Caco-2 (cell line): ENCODE measurements at regions of chr5 and their contacts with region 1.

Region 1: DNA sequence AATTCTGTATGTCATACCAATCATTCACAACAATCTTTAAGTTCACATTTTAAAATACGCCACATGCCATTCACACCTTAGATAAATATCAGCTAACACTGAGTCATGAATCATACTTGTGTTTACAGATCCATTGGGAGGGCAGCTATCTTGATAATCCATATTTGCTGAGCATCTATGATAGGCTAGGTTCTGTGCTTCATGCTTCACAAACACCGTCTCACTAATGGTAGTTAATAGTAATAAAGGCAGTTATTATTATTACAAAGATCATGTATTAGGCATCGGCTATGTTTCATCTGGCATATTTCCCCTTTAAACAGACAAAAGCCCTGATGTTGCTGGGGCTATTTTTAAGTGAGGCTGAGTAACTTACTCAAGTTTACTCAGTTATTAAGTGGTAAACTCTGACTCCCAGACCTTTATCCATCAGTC is 152.2 kb upstream of the HMHB1 start:
- DNase-seq: peak; percentile 40 to 73
- H3K4me3 ChIP-seq: no peak overlapping the region
- H3K4me3 Mint-ChIP-seq: peak overlapping the region; percentile 30
- H3K27ac Mint-ChIP-seq: peak overlapping the region; percentile 88
- H3K4me1 ChIP-seq: peaks cover 32% of the 10 kb centered on the region
- H3K4me1 Mint-ChIP-seq: peaks cover 17% of the 10 kb centered on the region
- H3K27me3 ChIP-seq: no peaks in the 10 kb centered on the region
- H3K27me3 Mint-ChIP-seq: no peaks in the 10 kb centered on the region
- CTCF ChIP-seq: no peak

Region 2: GRCh38 chr5:143554918-143555519 is 104.7 kb before region 1 on chr5:
- CTCF ChIA-PET with region 1: no interaction called
- POLR2A ChIA-PET with region 1: no interaction called
- intact Hi-C with region 1: loop called (anchors 1 kb)
- DNase-seq: peak; percentile 53 to 64
- H3K4me3 ChIP-seq: no peak overlapping the region
- H3K4me3 Mint-ChIP-seq: no peak overlapping the region
- H3K27ac Mint-ChIP-seq: peak overlapping the region; percentile 79
- H3K4me1 ChIP-seq: peaks cover 15% of the 10 kb centered on the region
- H3K4me1 Mint-ChIP-seq: peaks cover 20% of the 10 kb centered on the region
- H3K27me3 ChIP-seq: no peaks in the 10 kb centered on the region
- H3K27me3 Mint-ChIP-seq: no peaks in the 10 kb centered on the region
- CTCF ChIP-seq: no peak

Region 3: DNA sequence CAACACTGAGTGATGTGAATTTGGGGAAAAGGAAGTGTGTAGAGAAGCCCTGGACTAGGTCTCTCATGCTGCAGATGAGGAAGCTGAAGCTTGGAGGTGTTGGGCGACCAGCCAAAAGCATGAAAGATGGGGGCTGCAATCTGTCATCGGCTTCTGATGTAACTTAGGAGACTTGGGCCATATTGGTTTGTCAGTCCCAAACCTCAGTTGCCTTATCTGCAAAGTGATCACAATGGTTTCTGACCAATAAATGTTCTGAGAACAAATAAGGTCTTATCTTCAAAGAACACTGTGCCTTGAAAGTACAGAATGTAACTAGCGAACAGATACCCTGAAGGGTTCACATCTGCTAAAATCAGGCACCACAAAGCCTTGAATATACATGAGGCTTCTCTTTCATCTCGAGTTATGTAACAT is 57.8 kb before region 1 on chr5:
- CTCF ChIA-PET with region 1: no interaction called
- POLR2A ChIA-PET with region 1: no interaction called
- intact Hi-C with region 1: loop called (anchors 1 kb)
- DNase-seq: peak; percentile 41 to 56
- H3K4me3 ChIP-seq: no peak overlapping the region
- H3K4me3 Mint-ChIP-seq: peak overlapping the region; percentile 19
- H3K27ac Mint-ChIP-seq: peak overlapping the region; percentile 79
- H3K4me1 ChIP-seq: peaks cover 53% of the 10 kb centered on the region
- H3K4me1 Mint-ChIP-seq: peaks cover 29% of the 10 kb centered on the region
- H3K27me3 ChIP-seq: no peaks in the 10 kb centered on the region
- H3K27me3 Mint-ChIP-seq: no peaks in the 10 kb centered on the region
- CTCF ChIP-seq: no peak

Region 4: GRCh38 chr5:143673676-143674447 is 14.1 kb after region 1 on chr5:
- CTCF ChIA-PET with region 1: no interaction called
- POLR2A ChIA-PET with region 1: interaction called, 3 read pairs
- intact Hi-C with region 1: loop called (anchors 1 kb)
- DNase-seq: peak in 1 of 2 experiments; percentile 35
- H3K4me3 ChIP-seq: no peak overlapping the region
- H3K4me3 Mint-ChIP-seq: peak overlapping the region; percentile 27
- H3K27ac Mint-ChIP-seq: peak overlapping the region; percentile 91
- H3K4me1 ChIP-seq: peaks cover 40% of the 10 kb centered on the region
- H3K4me1 Mint-ChIP-seq: peaks cover 46% of the 10 kb centered on the region
- H3K27me3 ChIP-seq: no peaks in the 10 kb centered on the region
- H3K27me3 Mint-ChIP-seq: no peaks in the 10 kb centered on the region
- CTCF ChIP-seq: no peak

Region 5: DNA sequence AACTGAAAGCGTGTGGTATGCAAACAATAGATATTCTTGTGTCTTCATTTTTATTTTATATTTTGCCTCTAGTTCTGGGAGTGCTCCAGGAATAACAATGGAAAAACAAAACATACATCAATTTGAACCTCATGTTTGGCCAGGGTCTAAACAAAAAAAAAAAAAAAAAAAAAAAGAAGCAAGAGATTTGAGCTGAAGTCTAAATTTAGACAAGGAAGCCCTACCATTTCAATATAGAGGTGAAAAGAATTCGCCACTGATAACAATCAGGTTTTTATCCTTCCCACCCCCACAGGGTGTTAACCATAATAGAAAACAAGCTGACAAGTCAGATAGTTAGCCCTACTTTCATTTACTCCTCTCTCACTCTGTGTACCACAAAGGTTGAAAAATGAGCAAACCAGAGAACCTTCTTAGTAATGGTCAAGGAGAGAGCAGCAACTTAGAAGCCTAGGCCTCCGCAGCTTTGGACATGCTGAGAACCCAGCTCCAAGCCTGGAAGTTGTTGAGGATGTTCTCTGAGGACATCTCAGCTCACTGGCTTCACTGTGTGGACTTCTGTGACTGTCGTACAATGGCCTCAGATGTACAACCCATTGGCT is 34.0 kb after region 1 on chr5:
- CTCF ChIA-PET with region 1: no interaction called
- POLR2A ChIA-PET with region 1: no interaction called
- intact Hi-C with region 1: no loop called
- DNase-seq: no peak
- H3K4me3 ChIP-seq: no peak overlapping the region
- H3K4me3 Mint-ChIP-seq: no peak overlapping the region
- H3K27ac Mint-ChIP-seq: no peak overlapping the region
- H3K4me1 ChIP-seq: 0 out of 2 replicates have a peak, but pooled peaks cover 4% of the 10 kb centered on the region
- H3K4me1 Mint-ChIP-seq: no peaks in the 10 kb centered on the region
- H3K27me3 ChIP-seq: no peaks in the 10 kb centered on the region
- H3K27me3 Mint-ChIP-seq: no peaks in the 10 kb centered on the region
- CTCF ChIP-seq: no peak